Sigmoid colon (tissue), 7 donors: ENCODE measurements at regions of chr6 and their contacts with region 1.

Region 1: GRCh38 chr6:99514089-99514488 is 1.1 kb downstream of the USP45 start:
- DNase-seq: no peak
- H3K4me3 ChIP-seq: peak overlapping the region in 3 of 4 donors; percentile 71 to 87 (median 81)
- H3K27ac ChIP-seq: peak overlapping the region in 1 of 4 donors; percentile 86
- H3K4me1 ChIP-seq: peaks cover 0 to 13% (median 11%) of the 10 kb centered on the region in 4 donors
- H3K27me3 ChIP-seq: no peaks in the 10 kb centered on the region
- CTCF ChIP-seq: no peak
- EP300 ChIP-seq: no peak
- POLR2A ChIP-seq: no peak

Region 2: DNA sequence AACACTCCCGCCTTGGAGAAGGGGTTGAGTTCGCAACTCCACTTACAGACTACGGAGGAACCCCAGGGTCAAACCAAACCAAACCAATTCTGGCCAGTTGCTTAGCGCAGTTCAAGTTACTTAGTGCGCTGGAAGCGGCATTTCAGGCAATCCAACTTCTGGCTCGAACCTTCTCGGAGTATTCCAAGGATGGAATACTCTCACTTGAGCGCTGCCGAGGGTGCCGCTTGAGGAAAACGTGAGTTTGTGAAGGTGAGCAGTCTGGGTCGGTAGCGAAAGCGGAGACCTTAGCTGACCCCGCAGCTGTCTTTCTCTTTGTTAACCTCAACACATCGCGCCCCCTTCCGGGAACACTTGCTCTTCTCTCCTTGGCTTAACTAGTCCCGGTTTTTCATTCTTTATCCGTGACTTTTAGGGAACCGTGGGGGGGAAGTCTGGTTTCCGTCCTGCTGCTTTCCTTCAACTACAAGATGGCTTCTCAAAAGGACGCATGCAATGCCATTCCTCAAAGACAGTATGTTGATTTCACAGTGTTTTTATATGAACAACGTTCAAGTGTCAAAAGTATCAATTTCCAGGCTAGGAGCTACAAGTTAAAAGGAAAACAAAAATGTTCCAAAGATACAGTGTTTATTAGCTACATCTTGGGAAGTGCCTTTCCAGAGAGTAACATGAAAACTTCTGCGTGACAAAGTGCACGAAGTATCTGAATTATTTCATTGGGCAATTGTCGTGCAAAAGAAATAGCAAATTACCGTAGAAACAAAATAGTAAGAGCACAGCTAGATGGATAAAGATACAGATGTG is 88.2 kb before region 1 on chr6:
- intact Hi-C with region 1: loop called (anchors 2 kb)
- DNase-seq: peak; percentile 93
- H3K4me3 ChIP-seq: peak overlapping the region; percentile 70 to 90 (median 78)
- H3K27ac ChIP-seq: peak overlapping the region; percentile 92 to 97 (median 96)
- H3K4me1 ChIP-seq: peaks cover 0 to 57% (median 48%) of the 10 kb centered on the region in 4 donors
- H3K27me3 ChIP-seq: no peaks in the 10 kb centered on the region
- CTCF ChIP-seq: peak; percentile 34 to 53 (median 42)
- EP300 ChIP-seq: peak in 1 of 4 donors; percentile 28
- POLR2A ChIP-seq: peak in 1 of 2 donors; percentile 9

Region 3: GRCh38 chr6:99568103-99568933 is 54.2 kb after region 1 on chr6 and contains the start of gene CCNC:
- intact Hi-C with region 1: loop called (anchors 2 kb)
- DNase-seq: peak; percentile 97
- H3K4me3 ChIP-seq: peak within 1 kb of the TSS; percentile 75 to 86 (median 81)
- H3K27ac ChIP-seq: peak within 1 kb of the TSS; percentile 74 to 82 (median 80)
- H3K4me1 ChIP-seq: peaks cover 0 to 18% (median 16%) of the 10 kb centered on the region in 4 donors
- H3K27me3 ChIP-seq: no peaks in the 10 kb centered on the region
- CTCF ChIP-seq: no peak
- EP300 ChIP-seq: no peak
- POLR2A ChIP-seq: peak; percentile 67 to 69
- total RNA-seq, gene CCNC: 38.5 to 65.3 (median 55.8) TPM